ENCODE measurements at regions of chr19 and their contacts with region 1.

Region 1: GRCh38 chr19:41859618-41860418 is at the start of gene RPS19:
- DNase-seq: peak; percentile 98 to 99
- ATAC-seq: peak; percentile 86 to 95 (median 86)
- H3K4me3 ChIP-seq: peak within 1 kb of the TSS; percentile 82
- H3K4me3 Mint-ChIP-seq: peak within 1 kb of the TSS; percentile 95
- H3K27ac ChIP-seq: peak within 1 kb of the TSS; percentile 92
- H3K27ac Mint-ChIP-seq: peak within 1 kb of the TSS; percentile 94 to 96
- H3K4me1 ChIP-seq: peaks cover 48% of the 10 kb centered on the region
- H3K4me1 Mint-ChIP-seq: peaks cover 35 to 52% of the 10 kb centered on the region in 2 donors
- H3K27me3 ChIP-seq: no peaks in the 10 kb centered on the region
- H3K27me3 Mint-ChIP-seq: no peaks in the 10 kb centered on the region
- CTCF ChIP-seq: peak; percentile 72
- total RNA-seq, gene RPS19: 1,358 to 1,814 (median 1,709) TPM

Region 2: DNA sequence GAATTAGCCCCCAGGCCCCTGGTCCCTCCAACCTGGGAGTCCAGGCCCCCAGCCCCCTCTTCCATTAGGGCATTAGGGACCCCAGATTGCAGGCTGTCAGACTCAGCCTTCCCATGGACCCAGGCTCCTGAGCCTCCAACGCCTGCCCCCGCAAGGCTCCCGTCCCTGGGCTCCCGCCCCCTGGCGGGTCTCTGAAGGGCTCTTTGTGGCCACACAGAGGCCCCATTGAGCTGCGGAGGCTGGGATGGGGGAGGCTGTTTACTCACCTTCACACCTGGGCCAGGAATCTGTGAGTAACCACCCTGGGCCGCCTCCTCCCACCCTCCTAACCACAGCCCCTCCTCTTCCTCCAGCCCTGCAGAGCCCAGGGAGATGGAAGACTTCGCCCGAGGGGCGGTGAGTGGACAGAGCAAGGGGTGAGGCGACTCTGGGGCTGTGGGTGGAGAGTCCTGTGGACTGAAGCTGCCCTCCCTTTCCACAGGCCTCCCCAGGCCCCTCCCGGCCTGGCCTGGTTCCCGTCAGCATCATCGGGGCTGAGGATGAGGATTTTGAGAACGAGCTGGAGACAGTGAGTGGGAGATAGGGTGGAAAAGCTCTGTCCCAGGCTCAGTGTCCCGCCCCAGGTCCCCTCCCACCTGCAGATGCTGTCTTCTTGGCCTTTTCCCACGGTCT is 28.0 kb after region 1 on chr19:
- intact Hi-C with region 1: loop called (anchors 1 kb)
- DNase-seq: peak; percentile 75 to 90
- ATAC-seq: peak; percentile 25 to 34 (median 27)
- H3K4me3 ChIP-seq: peak overlapping the region; percentile 56
- H3K4me3 Mint-ChIP-seq: peak overlapping the region; percentile 84
- H3K27ac ChIP-seq: peak overlapping the region; percentile 92
- H3K27ac Mint-ChIP-seq: peak overlapping the region; percentile 84 to 89
- H3K4me1 ChIP-seq: peaks cover 85% of the 10 kb centered on the region
- H3K4me1 Mint-ChIP-seq: peaks cover 61 to 83% of the 10 kb centered on the region in 2 donors
- H3K27me3 ChIP-seq: no peaks in the 10 kb centered on the region
- H3K27me3 Mint-ChIP-seq: no peaks in the 10 kb centered on the region
- CTCF ChIP-seq: no peak

Region 3: GRCh38 chr19:41951686-41952172 is 91.9 kb after region 1 on chr19:
- intact Hi-C with region 1: loop called (anchors 1 kb)
- DNase-seq: peak; percentile 89 to 93
- ATAC-seq: peak; percentile 88 to 96 (median 95)
- H3K4me3 ChIP-seq: no peak overlapping the region
- H3K4me3 Mint-ChIP-seq: peak overlapping the region; percentile 9
- H3K27ac ChIP-seq: no peak overlapping the region
- H3K27ac Mint-ChIP-seq: peak overlapping the region in 1 of 2 donors; percentile 81
- H3K4me1 ChIP-seq: peaks cover 21% of the 10 kb centered on the region
- H3K4me1 Mint-ChIP-seq: peaks cover 18 to 24% of the 10 kb centered on the region in 2 donors
- H3K27me3 ChIP-seq: no peaks in the 10 kb centered on the region
- H3K27me3 Mint-ChIP-seq: no peaks in the 10 kb centered on the region
- CTCF ChIP-seq: peak; percentile 99

Region 4: GRCh38 chr19:42032431-42032830 is 172.6 kb after region 1 on chr19:
- intact Hi-C with region 1: loop called (anchors 2 kb)
- DNase-seq: no peak
- ATAC-seq: no peak
- H3K4me3 ChIP-seq: no peak overlapping the region
- H3K4me3 Mint-ChIP-seq: no peak overlapping the region
- H3K27ac ChIP-seq: no peak overlapping the region
- H3K27ac Mint-ChIP-seq: no peak overlapping the region
- H3K4me1 ChIP-seq: no peaks in the 10 kb centered on the region
- H3K4me1 Mint-ChIP-seq: no peaks in the 10 kb centered on the region
- H3K27me3 ChIP-seq: no peaks in the 10 kb centered on the region
- H3K27me3 Mint-ChIP-seq: peaks cover 3 to 13% of the 10 kb centered on the region in 2 donors
- CTCF ChIP-seq: no peak

Region 5: DNA sequence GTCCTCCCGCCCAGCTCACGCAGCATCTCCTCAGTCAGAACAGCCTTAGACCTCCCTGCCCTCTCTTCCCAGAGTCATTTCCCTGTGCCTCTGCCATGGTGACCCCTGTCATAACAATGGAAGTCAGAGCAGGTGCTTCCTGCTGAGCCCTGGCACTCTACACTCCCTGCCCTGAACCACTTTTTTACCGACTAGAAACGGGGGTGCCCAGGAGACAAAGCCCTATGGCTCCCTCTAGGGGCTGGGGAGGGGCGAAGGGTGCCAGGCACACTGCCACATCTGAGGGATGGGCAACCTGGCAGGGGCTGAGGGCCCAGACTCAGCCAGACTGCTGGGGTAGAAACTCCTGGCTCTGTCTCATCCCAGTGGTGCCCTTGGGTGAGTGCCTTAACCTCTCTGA is 232.5 kb after region 1 on chr19:
- intact Hi-C with region 1: no loop called
- DNase-seq: peak in 1 of 2 donors; percentile 64
- ATAC-seq: peak in 2 of 3 donors; percentile 59
- H3K4me3 ChIP-seq: no peak overlapping the region
- H3K4me3 Mint-ChIP-seq: no peak overlapping the region
- H3K27ac ChIP-seq: no peak overlapping the region
- H3K27ac Mint-ChIP-seq: peak overlapping the region; percentile 43 to 49
- H3K4me1 ChIP-seq: peaks cover 21% of the 10 kb centered on the region
- H3K4me1 Mint-ChIP-seq: peaks cover 12 to 38% of the 10 kb centered on the region in 2 donors
- H3K27me3 ChIP-seq: no peaks in the 10 kb centered on the region
- H3K27me3 Mint-ChIP-seq: peaks cover 0 to 2% of the 10 kb centered on the region in 2 donors
- CTCF ChIP-seq: peak; percentile 18